Activated CD8-positive, alpha-beta T cell treated with anti-CD3 and anti-CD28 coated beads, Interleukin-2, amount 10 ng/mL, durations not matched to agents 7 days and 5 days (primary cell): ENCODE measurements at regions of chr2 and their contacts with region 1.

Region 1: GRCh38 chr2:134411828-134412638 is 158.2 kb downstream of the MGAT5 start:
- DNase-seq: peak; percentile 88
- ATAC-seq: peak; percentile 97
- H3K4me3 Mint-ChIP-seq: no peak overlapping the region
- H3K27ac Mint-ChIP-seq: peak overlapping the region; percentile 71
- H3K4me1 Mint-ChIP-seq: peaks cover 47% of the 10 kb centered on the region
- H3K27me3 Mint-ChIP-seq: no peaks in the 10 kb centered on the region

Region 2: DNA sequence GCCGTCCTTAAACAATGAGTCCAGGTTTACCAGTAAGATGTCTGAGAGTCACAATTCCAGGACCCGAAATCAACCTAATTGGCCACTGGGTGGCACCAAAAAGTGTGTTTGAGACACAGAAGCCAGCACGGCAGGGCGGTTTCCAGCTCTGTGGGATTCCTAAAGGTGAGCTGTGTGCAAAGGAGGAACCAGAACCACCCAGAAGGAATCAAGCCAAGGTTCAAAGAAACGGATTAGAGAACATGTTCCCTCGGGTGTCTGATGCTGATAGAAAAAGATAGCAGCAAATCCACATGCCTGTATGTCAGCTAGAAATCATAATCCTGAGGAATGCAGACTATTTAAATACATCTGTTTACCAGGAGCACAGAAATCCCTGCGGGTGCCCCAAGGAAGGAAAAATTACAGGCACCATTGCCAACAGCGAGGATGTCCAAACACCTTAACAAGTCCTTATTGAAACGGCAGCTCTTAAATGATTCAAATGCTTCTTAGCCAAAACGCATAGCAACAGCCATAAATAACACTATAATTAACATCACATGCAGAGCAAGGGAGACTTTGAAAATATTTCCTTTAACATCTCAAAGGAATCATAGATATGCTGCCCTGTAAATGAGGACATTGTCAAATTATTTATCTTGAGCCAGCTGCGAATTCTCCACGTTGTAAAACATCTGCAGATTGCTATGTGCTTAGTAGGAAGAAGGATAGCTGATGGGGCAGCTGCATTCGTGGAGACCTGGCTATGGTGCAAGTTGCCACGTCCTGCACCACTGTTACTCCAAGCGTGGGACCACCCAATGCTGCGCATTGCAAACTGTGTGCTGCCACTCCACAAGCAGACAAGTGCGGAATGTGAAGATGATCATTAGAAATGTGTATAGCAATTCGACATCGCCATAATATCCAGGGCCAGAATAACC is 525.0 kb before region 1 on chr2:
- CTCF ChIA-PET with region 1: interaction called, 18 read pairs
- POLR2A ChIA-PET with region 1: no interaction called
- DNase-seq: peak; percentile 60
- ATAC-seq: peak; percentile 67
- H3K4me3 Mint-ChIP-seq: no peak overlapping the region
- H3K27ac Mint-ChIP-seq: no peak overlapping the region
- H3K4me1 Mint-ChIP-seq: no peaks in the 10 kb centered on the region
- H3K27me3 Mint-ChIP-seq: peaks cover 5% of the 10 kb centered on the region

Region 3: DNA sequence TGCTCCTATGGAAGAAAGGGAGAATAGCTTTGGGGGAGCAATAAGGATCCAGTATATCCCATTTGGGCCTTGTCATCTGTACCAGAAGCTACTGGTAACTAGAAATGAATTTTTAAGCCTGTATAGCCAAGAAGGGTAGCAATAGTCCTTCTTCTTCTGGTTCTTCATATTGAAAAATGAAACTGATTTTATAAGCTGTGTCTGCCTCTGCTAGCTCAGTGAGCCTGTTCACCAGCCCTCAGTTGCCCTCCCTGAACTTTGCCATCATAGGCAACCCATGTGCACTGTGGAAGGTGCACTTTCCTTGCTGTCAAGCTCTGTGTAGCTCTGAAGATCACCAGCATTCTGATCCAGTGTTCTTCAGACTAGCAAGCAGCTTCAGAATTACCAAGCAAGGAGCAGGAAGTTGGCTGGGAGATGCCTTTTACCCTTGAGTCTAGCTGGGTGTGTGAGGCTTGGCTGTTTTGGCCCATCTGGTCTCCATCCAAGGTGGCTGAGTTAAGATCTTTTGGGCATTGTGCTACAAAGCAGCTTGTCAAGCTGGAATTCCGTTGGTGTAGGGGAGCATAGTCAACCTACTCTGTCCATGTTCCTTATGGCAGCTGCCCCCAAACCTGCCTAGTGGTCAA is 213.9 kb before region 1 on chr2:
- CTCF ChIA-PET with region 1: interaction called, 10 read pairs
- POLR2A ChIA-PET with region 1: no interaction called
- DNase-seq: no peak
- ATAC-seq: peak; percentile 57
- H3K4me3 Mint-ChIP-seq: peak overlapping the region; percentile 26
- H3K27ac Mint-ChIP-seq: peak overlapping the region; percentile 52
- H3K4me1 Mint-ChIP-seq: peaks cover 39% of the 10 kb centered on the region
- H3K27me3 Mint-ChIP-seq: no peaks in the 10 kb centered on the region

Region 4: DNA sequence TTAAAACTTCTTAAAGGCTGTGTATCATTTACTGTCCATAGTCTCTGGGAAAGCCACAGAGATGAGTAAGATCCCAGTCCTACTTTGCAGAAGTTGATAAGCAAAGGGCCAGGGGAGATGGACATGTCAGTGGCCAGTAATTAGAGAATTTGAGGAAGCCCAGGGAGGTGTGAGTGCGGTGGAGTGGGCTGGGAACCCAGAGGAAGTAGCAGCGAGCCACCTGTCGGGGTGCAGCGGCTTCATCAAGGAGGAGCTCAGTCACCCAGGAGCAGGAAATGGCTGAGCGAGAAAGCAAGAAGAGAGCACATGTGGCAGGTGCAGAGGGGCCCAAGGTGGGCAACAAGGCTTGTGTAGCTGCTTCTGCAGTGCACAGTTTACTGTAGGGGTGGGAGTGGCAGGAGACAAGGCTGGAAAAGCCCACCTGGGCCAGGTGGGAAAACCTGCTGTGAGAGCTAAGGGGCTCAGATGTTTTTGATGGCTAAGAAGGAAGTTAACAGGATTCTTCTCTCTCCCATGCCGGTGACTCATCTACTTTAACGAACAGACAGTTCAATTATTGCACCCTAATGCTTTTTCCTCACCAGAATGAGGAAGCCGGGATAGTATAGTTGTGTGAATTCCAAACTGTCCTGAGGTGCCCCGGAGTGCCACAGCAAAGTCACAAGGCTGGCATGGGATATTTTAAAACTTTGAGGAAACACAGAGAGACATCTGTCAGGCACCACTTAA is 192.9 kb before region 1 on chr2:
- CTCF ChIA-PET with region 1: interaction called, 13 read pairs
- POLR2A ChIA-PET with region 1: no interaction called
- DNase-seq: peak; percentile 65
- ATAC-seq: peak; percentile 78
- H3K4me3 Mint-ChIP-seq: peak overlapping the region; percentile 40
- H3K27ac Mint-ChIP-seq: peak overlapping the region; percentile 85
- H3K4me1 Mint-ChIP-seq: peaks cover 49% of the 10 kb centered on the region
- H3K27me3 Mint-ChIP-seq: no peaks in the 10 kb centered on the region

Region 5: DNA sequence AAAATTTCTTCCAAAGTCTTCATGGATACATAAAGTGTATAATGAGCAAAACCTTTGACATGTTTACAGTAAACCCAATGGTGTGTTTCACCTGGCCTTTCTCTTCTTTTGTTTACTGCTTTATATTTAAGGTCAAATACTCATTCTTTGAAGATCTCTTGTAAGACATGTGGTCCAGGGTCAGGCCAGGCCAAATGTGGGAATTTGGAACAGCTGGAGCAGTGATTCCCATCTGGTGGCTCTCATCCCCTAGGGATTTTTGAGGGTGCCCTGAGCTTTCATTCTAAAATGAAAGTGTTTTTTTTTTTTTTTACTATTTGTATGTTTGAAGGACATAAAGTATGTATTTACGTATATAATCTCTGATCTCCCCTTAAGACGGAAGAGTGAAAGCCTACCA is 172.0 kb before region 1 on chr2:
- CTCF ChIA-PET with region 1: interaction called, 74 read pairs
- POLR2A ChIA-PET with region 1: no interaction called
- DNase-seq: no peak
- ATAC-seq: no peak
- H3K4me3 Mint-ChIP-seq: no peak overlapping the region
- H3K27ac Mint-ChIP-seq: no peak overlapping the region
- H3K4me1 Mint-ChIP-seq: peaks cover 52% of the 10 kb centered on the region
- H3K27me3 Mint-ChIP-seq: no peaks in the 10 kb centered on the region

Region 6: GRCh38 chr2:134253804-134254203 is 158.2 kb before region 1 on chr2 and contains the start of gene MGAT5:
- CTCF ChIA-PET with region 1: interaction called, 22 read pairs
- POLR2A ChIA-PET with region 1: no interaction called
- DNase-seq: no peak
- ATAC-seq: no peak
- H3K4me3 Mint-ChIP-seq: no peak within 1 kb of the TSS
- H3K27ac Mint-ChIP-seq: no peak within 1 kb of the TSS
- H3K4me1 Mint-ChIP-seq: peaks cover 93% of the 10 kb centered on the region
- H3K27me3 Mint-ChIP-seq: peaks cover 2% of the 10 kb centered on the region
- total RNA-seq, gene MGAT5: 48.5 to 54.3 TPM

Region 7: DNA sequence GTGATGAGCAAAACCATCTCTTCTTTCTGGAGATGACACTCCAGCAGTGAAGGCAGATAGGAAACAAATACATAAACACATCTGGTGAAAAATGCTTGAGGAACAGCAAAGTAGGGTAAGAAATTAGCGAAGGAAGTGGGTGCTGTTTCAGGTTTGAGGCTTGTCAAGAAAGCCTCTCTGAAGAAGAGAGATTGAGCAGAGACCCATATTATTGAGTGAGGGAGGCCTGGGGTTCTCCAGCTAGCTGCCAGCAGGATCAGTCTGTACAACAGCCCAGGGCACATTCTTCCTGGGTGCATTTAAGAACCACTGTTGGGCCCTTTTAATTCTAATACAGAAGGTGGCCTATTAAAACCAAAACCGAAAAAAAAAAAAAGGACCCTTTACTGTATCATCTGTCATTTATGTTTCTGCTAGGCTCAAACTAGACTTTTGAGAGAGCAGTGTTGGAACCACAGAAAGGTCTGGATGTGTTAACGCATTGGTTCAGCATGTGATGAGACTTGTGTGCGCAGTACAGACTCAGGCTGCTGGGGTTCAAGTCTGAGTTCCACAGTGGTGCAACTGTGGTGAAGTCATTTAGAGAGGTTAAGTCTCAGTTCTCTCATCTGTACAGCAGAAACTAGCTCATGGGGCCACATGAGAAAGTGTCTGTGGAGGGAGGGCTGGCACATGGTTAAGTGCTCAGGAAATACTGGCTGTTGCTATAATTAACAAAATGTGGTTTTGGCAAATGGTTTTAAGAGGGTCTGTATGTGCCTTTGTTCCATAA is 129.2 kb before region 1 on chr2:
- CTCF ChIA-PET with region 1: interaction called, 13 read pairs
- POLR2A ChIA-PET with region 1: no interaction called
- DNase-seq: peak; percentile 73
- ATAC-seq: peak; percentile 89
- H3K4me3 Mint-ChIP-seq: peak overlapping the region; percentile 62
- H3K27ac Mint-ChIP-seq: peak overlapping the region; percentile 88
- H3K4me1 Mint-ChIP-seq: peaks cover 44% of the 10 kb centered on the region
- H3K27me3 Mint-ChIP-seq: no peaks in the 10 kb centered on the region

Region 8: GRCh38 chr2:134917888-134918525 is 506.0 kb after region 1 on chr2:
- CTCF ChIA-PET with region 1: no interaction called
- POLR2A ChIA-PET with region 1: no interaction called
- DNase-seq: peak; percentile 93
- ATAC-seq: peak; percentile 79
- H3K4me3 Mint-ChIP-seq: peak overlapping the region; percentile 98
- H3K27ac Mint-ChIP-seq: peak overlapping the region; percentile 97
- H3K4me1 Mint-ChIP-seq: peaks cover 30% of the 10 kb centered on the region
- H3K27me3 Mint-ChIP-seq: peaks cover 6% of the 10 kb centered on the region